ENCODE measurements at regions of chr22 and their contacts with region 1.

Region 1: DNA sequence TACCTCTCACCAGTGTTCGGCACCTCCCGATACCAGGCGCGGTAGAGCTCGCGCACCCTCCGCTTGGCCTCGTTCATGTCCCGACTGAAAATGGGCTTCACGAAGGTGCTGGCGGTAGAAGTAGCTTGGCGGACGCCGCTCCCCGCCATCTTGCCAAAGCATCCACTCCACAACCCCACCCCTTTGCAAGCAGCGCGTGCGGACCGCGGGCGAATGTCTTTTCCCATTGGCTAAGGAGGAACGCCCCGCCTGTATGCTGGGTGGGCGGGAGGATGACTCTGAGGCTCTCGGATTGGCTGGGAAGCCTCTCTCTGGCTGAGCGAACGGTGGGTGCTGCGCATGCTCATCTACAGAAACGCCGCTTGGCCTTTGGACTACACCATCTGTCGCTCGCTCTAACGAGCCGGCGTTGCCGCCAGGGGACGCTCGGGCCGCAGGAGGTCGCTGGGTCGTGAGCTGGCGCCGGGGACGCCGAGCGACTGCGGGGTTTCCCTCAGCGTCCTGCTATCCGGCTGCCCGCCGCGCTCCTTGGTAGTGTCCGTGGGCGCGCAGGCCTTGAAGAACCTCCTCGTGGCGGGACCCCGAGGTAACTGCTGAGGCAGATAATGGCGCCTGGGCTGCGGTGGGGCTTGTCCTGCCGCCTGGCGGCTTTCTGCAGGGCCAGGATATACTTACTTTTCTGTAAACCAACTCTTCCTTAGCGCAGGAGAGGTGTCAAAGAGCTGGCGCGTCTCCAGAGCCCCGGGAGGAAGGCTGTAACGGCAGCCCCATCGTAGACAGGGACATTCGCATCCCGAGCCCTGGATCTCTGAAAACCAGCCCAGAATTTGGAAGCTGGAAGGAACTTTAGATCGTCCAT is at the start of gene NDUFA6:
- DNase-seq: peak; percentile 96 to 99 (median 98)
- H3K4me3 ChIP-seq: peak within 1 kb of the TSS; percentile 92
- H3K4me3 Mint-ChIP-seq: peak within 1 kb of the TSS; percentile 98 to 99 (median 99)
- H3K27ac ChIP-seq: peak within 1 kb of the TSS; percentile 94
- H3K27ac Mint-ChIP-seq: peak within 1 kb of the TSS; percentile 96 to 99 (median 98)
- H3K4me1 ChIP-seq: peaks cover 24% of the 10 kb centered on the region
- H3K4me1 Mint-ChIP-seq: peaks cover 33 to 51% (median 49%) of the 10 kb centered on the region in 3 donors
- H3K27me3 ChIP-seq: no peaks in the 10 kb centered on the region
- H3K27me3 Mint-ChIP-seq: no peaks in the 10 kb centered on the region
- total RNA-seq, gene NDUFA6: 106 to 126 TPM

Region 2: GRCh38 chr22:42041784-42042183 is 49.0 kb before region 1 on chr22:
- CTCF ChIA-PET with region 1: no interaction called
- POLR2A ChIA-PET with region 1: no interaction called
- DNase-seq: no peak
- H3K4me3 ChIP-seq: no peak overlapping the region
- H3K4me3 Mint-ChIP-seq: no peak overlapping the region
- H3K27ac ChIP-seq: no peak overlapping the region
- H3K27ac Mint-ChIP-seq: no peak overlapping the region
- H3K4me1 ChIP-seq: no peaks in the 10 kb centered on the region
- H3K4me1 Mint-ChIP-seq: no peaks in the 10 kb centered on the region
- H3K27me3 ChIP-seq: no peaks in the 10 kb centered on the region
- H3K27me3 Mint-ChIP-seq: peaks cover 0 to 8% of the 10 kb centered on the region in 2 donors

Region 3: GRCh38 chr22:42070517-42071422 is 20.1 kb before region 1 on chr22 and contains the start of gene NAGA:
- CTCF ChIA-PET with region 1: interaction called, 10 read pairs
- POLR2A ChIA-PET with region 1: interaction called, 7 read pairs
- DNase-seq: peak; percentile 87 to 94 (median 88)
- H3K4me3 ChIP-seq: peak within 1 kb of the TSS; percentile 85
- H3K4me3 Mint-ChIP-seq: peak within 1 kb of the TSS; percentile 91 to 96 (median 93)
- H3K27ac ChIP-seq: peak within 1 kb of the TSS; percentile 76
- H3K27ac Mint-ChIP-seq: peak within 1 kb of the TSS; percentile 68 to 94 (median 91)
- H3K4me1 ChIP-seq: peaks cover 26% of the 10 kb centered on the region
- H3K4me1 Mint-ChIP-seq: peaks cover 35 to 54% (median 46%) of the 10 kb centered on the region in 3 donors
- H3K27me3 ChIP-seq: no peaks in the 10 kb centered on the region
- H3K27me3 Mint-ChIP-seq: no peaks in the 10 kb centered on the region
- total RNA-seq, gene NAGA: 20.3 to 21.2 TPM

Region 4: DNA sequence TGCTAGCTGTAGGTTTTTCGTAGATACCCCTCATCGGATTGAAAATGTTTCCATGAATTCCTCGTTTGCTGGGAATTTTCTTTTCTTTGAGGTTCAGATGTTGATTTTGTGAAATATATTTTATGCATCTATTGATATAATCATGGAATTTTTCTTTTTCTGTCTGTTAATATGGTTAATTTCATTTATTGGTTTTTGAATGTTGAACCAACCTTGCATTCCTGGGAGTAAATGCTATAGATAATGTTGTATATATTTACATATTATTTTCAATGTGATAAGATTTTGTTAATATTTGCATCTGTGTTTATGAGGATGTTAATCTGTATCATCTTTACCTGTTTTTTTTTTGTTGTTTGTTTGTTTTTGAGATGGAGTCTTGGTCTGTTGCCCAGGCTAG is 10.4 kb after region 1 on chr22:
- CTCF ChIA-PET with region 1: interaction called, 22 read pairs
- POLR2A ChIA-PET with region 1: no interaction called
- DNase-seq: no peak
- H3K4me3 ChIP-seq: no peak overlapping the region
- H3K4me3 Mint-ChIP-seq: no peak overlapping the region
- H3K27ac ChIP-seq: no peak overlapping the region
- H3K27ac Mint-ChIP-seq: no peak overlapping the region
- H3K4me1 ChIP-seq: no peaks in the 10 kb centered on the region
- H3K4me1 Mint-ChIP-seq: no peaks in the 10 kb centered on the region
- H3K27me3 ChIP-seq: no peaks in the 10 kb centered on the region
- H3K27me3 Mint-ChIP-seq: no peaks in the 10 kb centered on the region

Region 5: GRCh38 chr22:42169055-42169469 is 78.2 kb after region 1 on chr22:
- CTCF ChIA-PET with region 1: interaction called, 6 read pairs
- POLR2A ChIA-PET with region 1: interaction called, 10 read pairs
- DNase-seq: peak; percentile 56 to 86 (median 64)
- H3K4me3 ChIP-seq: no peak overlapping the region
- H3K4me3 Mint-ChIP-seq: no peak overlapping the region
- H3K27ac ChIP-seq: no peak overlapping the region
- H3K27ac Mint-ChIP-seq: peak overlapping the region in 5 of 8 donors; percentile 4 to 71 (median 22)
- H3K4me1 ChIP-seq: peaks cover 7% of the 10 kb centered on the region
- H3K4me1 Mint-ChIP-seq: peaks cover 27 to 43% (median 40%) of the 10 kb centered on the region in 3 donors
- H3K27me3 ChIP-seq: no peaks in the 10 kb centered on the region
- H3K27me3 Mint-ChIP-seq: no peaks in the 10 kb centered on the region

Region 6: DNA sequence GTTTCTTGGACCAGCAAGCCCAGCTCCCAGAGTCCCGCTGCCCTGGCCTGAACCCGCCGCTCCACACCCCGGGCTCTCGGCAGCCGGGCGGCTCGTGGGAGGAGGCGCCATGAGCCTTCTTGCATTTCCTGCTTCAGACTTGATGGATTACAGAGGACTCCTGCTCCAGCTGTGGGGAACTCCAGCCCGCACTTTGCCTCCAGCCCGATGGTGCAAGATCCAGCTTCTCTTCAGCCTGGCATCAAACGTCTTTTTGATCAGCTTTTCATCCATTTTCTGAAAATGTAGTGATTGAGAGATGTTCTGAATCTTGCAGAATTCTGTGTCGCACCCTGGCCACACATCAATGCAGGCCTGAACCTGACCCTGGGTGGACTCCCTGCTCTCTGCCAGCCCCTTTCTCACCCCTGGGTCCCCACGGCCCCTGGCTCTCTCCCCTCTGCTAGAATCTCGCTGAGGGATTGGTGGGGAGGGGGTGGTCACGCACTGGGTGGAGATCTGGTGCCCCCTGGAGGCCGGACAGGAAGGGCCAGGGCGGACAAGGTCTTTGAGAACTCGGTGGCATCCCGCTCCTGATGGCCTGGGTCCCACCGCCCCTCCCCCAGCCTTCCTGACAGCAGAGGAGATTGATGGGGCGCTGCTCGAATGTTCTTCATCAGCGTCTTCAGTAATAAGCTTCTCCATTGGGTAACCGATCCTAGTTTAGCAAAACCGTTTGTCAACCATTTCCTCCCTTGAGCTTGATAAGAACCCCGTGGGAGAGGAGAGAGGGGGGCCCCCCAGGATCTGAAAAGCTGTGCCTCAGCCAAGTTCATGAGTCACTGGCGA is 353.5 kb after region 1 on chr22:
- CTCF ChIA-PET with region 1: interaction called, 29 read pairs
- POLR2A ChIA-PET with region 1: interaction called, 17 read pairs
- DNase-seq: peak; percentile 63 to 85 (median 77)
- H3K4me3 ChIP-seq: peak overlapping the region; percentile 87
- H3K4me3 Mint-ChIP-seq: peak overlapping the region; percentile 55 to 91 (median 79)
- H3K27ac ChIP-seq: peak overlapping the region; percentile 67
- H3K27ac Mint-ChIP-seq: peak overlapping the region; percentile 76 to 96 (median 90)
- H3K4me1 ChIP-seq: peaks cover 20% of the 10 kb centered on the region
- H3K4me1 Mint-ChIP-seq: peaks cover 15 to 21% (median 18%) of the 10 kb centered on the region in 3 donors
- H3K27me3 ChIP-seq: no peaks in the 10 kb centered on the region
- H3K27me3 Mint-ChIP-seq: peaks cover under 1% of the 10 kb centered on the region in 2 donors